ENCODE measurements at regions of chr6 and their contacts with region 1.

Region 1: DNA sequence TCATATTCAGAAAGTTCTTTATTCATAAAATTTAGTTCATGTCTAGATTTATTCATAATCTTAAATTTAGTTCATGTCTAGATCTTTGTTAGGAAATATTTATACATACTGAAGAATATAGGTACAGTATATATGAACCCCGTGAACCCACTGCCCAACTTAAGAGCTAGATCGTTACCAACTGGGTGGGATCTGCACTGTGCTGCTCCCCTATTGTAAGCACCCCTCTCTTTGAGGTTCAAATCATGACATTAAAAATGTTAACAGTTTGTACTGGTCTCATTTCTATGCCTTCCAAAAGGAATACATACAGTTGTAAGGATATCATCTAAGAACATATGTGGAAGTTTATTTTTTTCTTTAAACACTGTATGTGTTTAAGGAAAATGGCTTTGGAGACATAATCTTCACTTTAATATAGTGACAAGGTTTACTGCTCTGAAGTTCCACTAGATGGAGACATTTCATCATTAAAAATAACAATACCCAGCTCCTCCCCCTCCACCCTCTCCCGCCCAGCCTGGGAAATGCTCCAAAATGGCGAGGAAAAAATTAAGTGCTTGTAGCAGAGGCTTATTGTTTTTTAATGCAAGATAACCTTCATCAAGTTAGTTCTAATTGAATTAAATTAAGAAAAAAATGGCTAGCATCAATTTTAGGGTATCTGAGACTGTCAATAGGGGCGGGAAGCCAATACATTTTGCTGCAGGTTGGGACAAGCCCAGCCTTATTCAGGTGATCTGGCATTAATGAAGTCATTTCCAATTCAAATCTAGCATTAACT is 104.1 kb upstream of the TRAF3IP2 start:
- DNase-seq: peak; percentile 70 to 71 (median 70)
- ATAC-seq: peak; percentile 96
- H3K4me3 ChIP-seq: no peak overlapping the region
- H3K27ac ChIP-seq: no peak overlapping the region
- H3K4me1 ChIP-seq: peaks cover 10% of the 10 kb centered on the region
- H3K27me3 ChIP-seq: no peaks in the 10 kb centered on the region
- CTCF ChIP-seq: peak; percentile 54 to 94 (median 90)
- POLR2A ChIP-seq: no peak

Region 2: DNA sequence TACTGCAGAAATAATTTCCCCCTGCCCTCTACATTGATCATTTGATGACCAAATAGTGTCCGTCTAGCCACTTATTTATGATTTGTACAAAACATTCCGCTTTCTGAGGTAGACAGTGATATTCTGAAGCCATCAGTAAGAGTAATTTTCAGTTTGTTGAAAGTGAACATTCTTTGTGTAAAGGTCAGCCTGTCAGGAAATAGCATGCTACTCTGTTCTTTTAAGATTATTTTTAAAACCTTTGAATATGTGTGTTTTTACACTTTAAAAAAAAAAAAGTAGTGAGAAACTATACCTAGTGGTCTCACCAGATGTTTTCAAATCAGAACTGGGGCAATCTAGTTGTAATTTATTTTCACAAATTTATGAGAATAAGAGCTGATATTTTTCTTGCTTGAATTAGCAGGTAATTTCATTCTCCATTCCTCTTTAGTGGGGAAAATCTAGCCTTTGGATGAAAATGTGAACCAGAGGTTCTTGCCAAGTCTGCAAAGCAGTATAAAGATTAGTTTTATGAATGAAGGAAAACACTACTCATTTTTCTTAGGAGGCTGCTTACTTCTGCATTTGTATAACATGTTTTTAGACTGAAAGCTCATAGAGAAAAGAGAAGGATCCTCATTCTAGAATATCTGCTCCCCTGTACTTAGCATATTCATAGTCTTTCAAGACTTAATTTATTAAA is 214.7 kb before region 1 on chr6:
- intact Hi-C with region 1: no loop called
- DNase-seq: no peak
- ATAC-seq: no peak
- H3K4me3 ChIP-seq: no peak overlapping the region
- H3K27ac ChIP-seq: no peak overlapping the region
- H3K4me1 ChIP-seq: no peaks in the 10 kb centered on the region
- H3K27me3 ChIP-seq: no peaks in the 10 kb centered on the region
- CTCF ChIP-seq: no peak
- POLR2A ChIP-seq: no peak

Region 3: DNA sequence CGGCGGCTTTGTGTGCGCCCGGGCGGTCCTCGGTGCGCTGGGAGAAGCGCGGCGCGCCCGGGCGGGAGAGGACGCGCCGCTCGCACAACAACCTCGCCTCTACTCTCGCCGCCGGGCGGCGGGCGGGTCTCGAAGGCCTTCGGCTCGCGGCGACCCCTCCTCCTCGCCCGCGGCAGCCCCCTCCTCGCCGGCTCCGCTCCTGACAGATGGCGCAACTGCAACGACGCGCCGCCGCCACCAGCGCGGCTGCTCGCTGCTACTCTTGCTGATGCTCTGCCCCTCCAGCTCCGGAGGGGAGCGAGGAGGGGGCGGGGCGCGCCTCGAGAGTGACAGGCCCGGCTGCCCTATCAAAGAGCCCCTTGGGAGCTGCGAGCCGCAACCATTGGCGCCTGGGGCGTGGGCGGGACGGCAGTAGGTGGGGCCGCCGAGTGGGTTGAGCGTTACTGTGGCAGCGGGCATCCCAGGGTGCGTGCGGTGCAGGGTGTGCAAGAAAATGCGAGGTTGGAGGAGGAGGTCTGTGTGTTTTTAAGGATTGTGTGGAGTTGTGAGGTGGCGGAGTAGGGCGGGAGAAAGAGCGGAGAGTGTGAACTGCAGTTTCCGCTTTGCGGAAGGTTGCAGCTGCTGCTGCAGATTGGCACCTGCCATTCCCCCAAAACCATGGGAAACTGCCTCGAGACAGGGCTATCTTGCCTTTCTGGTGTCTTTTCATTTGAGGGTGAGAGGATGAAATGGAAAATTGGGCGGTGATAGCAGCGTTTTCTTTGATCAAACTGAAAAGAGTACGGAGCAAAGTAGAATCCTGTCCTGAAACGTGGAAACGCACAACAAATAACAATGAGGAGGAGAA is 163.6 kb after region 1 on chr6 and contains the start of gene FYN:
- intact Hi-C with region 1: loop called (anchors 10 kb)
- DNase-seq: peak; percentile 93 to 96 (median 95)
- ATAC-seq: peak; percentile 99
- H3K4me3 ChIP-seq: peak within 1 kb of the TSS in 1 of 2 donors; percentile 46
- H3K27ac ChIP-seq: peak within 1 kb of the TSS; percentile 1 to 57 (median 52)
- H3K4me1 ChIP-seq: peaks cover 29% of the 10 kb centered on the region
- H3K27me3 ChIP-seq: peaks cover 3 to 10% of the 10 kb centered on the region in 2 donors
- CTCF ChIP-seq: peak; percentile 24 to 59 (median 49)
- POLR2A ChIP-seq: peak; percentile 22 to 58 (median 50)
- total RNA-seq, gene FYN: 25.7 to 83.1 TPM

Region 4: DNA sequence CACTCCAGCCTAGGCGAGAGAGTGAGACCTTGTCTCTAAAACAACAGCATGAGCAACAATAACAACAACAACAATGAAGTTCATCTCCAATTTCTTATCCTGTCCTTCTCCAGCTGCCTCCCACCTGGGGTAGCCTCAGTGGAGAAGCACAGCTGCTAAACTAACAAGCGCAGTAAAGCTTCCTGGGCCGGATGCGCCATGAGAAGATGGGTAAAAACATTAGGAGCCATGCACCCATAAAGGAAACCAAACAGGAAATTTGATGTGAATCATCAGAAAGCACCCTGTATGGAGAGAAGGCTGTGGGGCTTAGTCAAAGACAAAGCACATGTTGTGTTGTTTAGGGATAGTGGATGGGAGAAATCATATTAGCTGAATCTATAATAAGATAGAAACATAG is 283.0 kb after region 1 on chr6:
- intact Hi-C with region 1: loop called (anchors 5 kb)
- DNase-seq: no peak
- ATAC-seq: no peak
- H3K4me3 ChIP-seq: no peak overlapping the region
- H3K27ac ChIP-seq: no peak overlapping the region
- H3K4me1 ChIP-seq: no peaks in the 10 kb centered on the region
- H3K27me3 ChIP-seq: no peaks in the 10 kb centered on the region
- CTCF ChIP-seq: no peak
- POLR2A ChIP-seq: no peak

Region 5: DNA sequence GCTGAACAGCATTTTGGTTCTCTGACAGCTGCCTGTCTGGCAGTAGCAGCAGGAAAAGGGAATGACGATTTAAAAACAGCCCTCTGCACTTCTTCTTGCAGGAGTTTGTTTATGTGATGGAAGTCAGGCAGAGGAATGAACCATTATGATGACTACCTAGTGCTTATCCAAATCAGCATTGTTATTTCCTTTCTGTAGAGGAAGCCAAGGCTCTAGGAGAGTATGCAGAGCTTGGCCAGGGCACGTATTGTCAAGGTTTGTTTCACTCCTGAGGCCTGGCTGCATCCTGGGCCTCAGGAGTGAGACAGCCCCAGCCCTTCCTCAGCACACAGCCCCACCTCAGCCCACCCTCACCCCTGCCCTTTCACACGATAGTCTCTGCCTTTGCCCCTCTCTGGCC is 446.1 kb after region 1 on chr6:
- intact Hi-C with region 1: loop called (anchors 5 kb)
- DNase-seq: no peak
- ATAC-seq: no peak
- H3K4me3 ChIP-seq: no peak overlapping the region
- H3K27ac ChIP-seq: no peak overlapping the region
- H3K4me1 ChIP-seq: no peaks in the 10 kb centered on the region
- H3K27me3 ChIP-seq: no peaks in the 10 kb centered on the region
- CTCF ChIP-seq: no peak
- POLR2A ChIP-seq: no peak

Measured in body of pancreas (tissue), 4 donors.